ENCODE measurements at regions of chr12 and their contacts with region 1.

Region 1: DNA sequence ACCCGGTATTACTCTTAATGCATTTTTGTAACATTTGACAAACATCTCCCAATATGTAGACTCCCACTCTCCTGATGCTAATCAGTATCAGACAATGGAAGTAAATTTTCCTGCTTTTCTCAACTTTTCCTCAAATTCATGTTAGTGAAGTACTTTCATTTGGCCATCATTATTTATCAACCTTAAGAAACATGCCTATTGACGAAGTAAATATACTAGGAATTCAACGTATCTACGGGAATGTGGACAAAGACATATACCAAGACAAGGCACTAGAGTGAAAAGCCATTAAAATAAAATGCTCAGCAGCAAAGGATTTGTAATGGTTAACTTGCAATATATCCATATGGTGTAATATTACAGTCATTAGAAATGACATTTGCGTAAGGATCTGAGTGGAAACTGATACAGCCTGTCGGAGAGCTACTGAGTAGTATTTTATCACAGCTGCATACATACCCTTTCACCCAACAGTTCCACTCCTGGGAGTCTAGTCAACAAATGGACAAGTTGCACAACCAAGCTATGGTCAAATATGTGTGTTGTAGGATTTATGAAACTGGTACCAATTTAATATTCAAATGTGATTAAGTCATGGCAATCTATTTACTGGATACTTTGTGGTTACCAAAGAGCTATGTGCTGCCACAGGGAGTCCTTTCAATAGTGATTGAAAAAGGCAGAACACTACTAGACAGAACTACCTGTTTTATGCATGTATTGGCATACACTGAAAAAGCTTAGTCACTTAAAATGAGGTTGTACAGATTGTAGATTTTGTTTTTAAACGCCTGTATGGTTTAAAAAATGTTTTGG is 26.5 kb downstream of the NUDT4 start:
- DNase-seq: no peak
- ATAC-seq: peak; percentile 45
- H3K4me3 ChIP-seq: no peak overlapping the region
- H3K27ac ChIP-seq: peak overlapping the region; percentile 31
- H3K4me1 ChIP-seq: peaks cover 10% of the 10 kb centered on the region; the same call in 1 of the 2 replicates
- H3K27me3 ChIP-seq: no peaks in the 10 kb centered on the region
- CTCF ChIP-seq: no peak
- EP300 ChIP-seq: no peak
- POLR2A ChIP-seq: no peak; a peak in 1 of 4 replicates
- RAD21 ChIP-seq: no peak

Region 2: DNA sequence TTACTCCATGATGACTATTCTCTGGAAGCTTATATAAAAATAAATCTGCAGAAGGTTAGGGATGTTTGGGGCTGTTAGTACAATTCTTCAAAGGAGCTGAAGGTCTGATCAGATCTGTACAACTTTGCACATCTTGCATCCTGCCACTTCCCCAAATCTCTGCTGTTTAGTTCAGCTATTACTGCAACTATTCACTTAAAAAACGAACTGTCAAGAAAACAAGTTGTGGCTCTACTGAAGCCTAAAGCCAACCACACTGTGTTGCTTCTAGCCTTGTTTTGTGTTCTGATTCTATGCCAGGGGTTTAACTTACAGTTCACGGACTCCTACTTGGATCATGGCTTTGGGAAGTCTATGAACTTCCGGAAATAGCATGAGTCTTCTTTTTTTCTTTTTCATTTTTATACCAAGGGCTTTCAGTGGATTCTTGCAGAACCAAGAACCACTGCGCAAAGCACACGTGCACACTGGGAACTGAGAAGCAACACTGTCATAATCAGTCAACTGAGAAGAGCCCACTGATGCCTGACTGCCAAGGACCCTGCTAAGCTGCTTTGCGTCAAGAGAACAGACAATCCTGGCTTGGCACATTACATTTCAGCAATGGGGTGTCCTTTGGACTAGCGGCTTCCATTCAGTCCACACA is 408.8 kb before region 1 on chr12:
- CTCF ChIA-PET with region 1: no interaction called
- POLR2A ChIA-PET with region 1: no interaction called
- in situ Hi-C with region 1: loop called (anchors 10 kb)
- intact Hi-C with region 1: no loop called
- DNase-seq: no peak
- ATAC-seq: no peak
- H3K4me3 ChIP-seq: no peak overlapping the region
- H3K27ac ChIP-seq: no peak overlapping the region
- H3K4me1 ChIP-seq: peaks cover 6% of the 10 kb centered on the region
- H3K27me3 ChIP-seq: no peaks in the 10 kb centered on the region
- CTCF ChIP-seq: no peak
- EP300 ChIP-seq: no peak
- POLR2A ChIP-seq: no peak
- RAD21 ChIP-seq: no peak

Region 3: DNA sequence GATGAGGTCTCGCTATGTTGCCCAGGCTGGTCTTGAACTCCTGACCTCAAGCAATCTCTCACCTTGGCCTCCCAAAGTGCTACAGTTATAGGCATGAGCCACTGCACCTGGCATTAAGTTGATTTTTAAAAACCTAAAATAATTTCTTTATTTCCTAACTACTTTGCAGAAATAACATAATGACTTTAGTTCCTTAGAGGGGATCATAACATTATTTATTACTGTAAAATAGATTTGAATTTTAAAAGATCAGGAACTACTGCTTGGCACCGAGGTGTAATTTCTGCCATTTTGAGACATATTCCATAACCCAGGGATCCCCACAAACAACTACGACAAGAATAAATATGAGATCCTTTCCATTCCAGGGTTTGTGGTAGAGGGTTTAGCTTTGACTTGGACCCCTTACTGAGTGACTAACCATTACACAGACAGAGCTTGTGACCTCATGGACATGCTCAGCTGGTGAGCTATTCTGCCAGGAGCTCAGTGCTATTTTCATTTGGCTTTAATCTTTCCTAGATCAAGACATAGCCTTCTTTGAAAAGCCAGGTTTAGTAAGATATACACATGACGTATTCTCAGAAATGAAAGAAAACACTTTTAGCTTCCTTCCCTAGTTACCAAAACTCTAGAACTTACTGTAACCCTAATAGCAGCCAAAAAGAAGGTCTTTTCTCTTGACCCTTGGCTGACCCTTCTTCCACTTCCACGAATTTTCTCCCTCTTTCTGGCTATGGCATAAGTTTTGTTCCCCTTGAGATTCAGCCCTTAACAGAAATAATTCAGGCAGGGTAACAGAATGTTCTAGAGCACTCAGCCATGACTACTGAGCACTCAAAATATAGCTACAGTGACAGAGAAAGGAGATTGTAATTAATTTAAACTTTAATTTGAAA is 101.6 kb before region 1 on chr12:
- CTCF ChIA-PET with region 1: no interaction called
- POLR2A ChIA-PET with region 1: no interaction called
- in situ Hi-C with region 1: no loop called
- intact Hi-C with region 1: no loop called
- DNase-seq: no peak
- ATAC-seq: no peak
- H3K4me3 ChIP-seq: no peak overlapping the region
- H3K27ac ChIP-seq: no peak overlapping the region
- H3K4me1 ChIP-seq: peaks cover 16% of the 10 kb centered on the region
- H3K27me3 ChIP-seq: no peaks in the 10 kb centered on the region
- CTCF ChIP-seq: no peak
- EP300 ChIP-seq: no peak
- POLR2A ChIP-seq: no peak
- RAD21 ChIP-seq: no peak

Region 4: DNA sequence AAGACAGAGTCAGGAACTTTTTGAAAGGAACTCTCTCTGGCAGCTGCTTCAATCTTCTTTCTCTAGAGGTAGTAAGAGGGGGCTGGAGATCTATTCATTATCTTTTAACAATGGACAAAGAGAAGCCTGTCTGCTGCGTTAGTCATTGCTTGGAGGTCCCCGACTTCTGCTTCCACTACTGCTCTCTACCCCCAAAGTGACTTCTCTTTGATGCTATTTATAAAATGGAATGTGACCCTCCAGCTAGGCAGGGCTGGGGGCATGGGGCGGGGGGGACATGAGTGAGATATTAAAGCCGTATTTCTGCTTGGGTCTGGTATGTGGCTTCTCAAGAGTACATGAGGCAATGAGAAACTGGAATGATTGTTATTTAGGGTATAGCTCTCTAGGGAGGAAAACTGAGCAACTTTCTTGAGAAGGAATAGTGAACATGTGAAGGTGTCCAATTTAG is 67.9 kb before region 1 on chr12:
- CTCF ChIA-PET with region 1: no interaction called
- POLR2A ChIA-PET with region 1: no interaction called
- in situ Hi-C with region 1: no loop called
- intact Hi-C with region 1: no loop called
- DNase-seq: peak; percentile 86
- ATAC-seq: peak; percentile 87
- H3K4me3 ChIP-seq: no peak overlapping the region; a peak in 1 of 6 replicates
- H3K27ac ChIP-seq: peak overlapping the region; percentile 32
- H3K4me1 ChIP-seq: peaks cover 19% of the 10 kb centered on the region
- H3K27me3 ChIP-seq: no peaks in the 10 kb centered on the region
- CTCF ChIP-seq: no peak
- EP300 ChIP-seq: 0 out of 4 replicates have a peak, but pooled peaks of 1 of the 2 experiments have one; percentile 5
- POLR2A ChIP-seq: no peak
- RAD21 ChIP-seq: no peak

Region 5: GRCh38 chr12:93612776-93613175 is 208.6 kb after region 1 on chr12:
- CTCF ChIA-PET with region 1: no interaction called
- POLR2A ChIA-PET with region 1: no interaction called
- in situ Hi-C with region 1: no loop called
- intact Hi-C with region 1: no loop called
- DNase-seq: no peak
- ATAC-seq: no peak
- H3K4me3 ChIP-seq: no peak overlapping the region
- H3K27ac ChIP-seq: no peak overlapping the region
- H3K4me1 ChIP-seq: no peaks in the 10 kb centered on the region
- H3K27me3 ChIP-seq: peaks cover 0 to 17% of the 10 kb centered on the region in 2 experiments; a peak in 2 of 5 replicates
- CTCF ChIP-seq: no peak
- EP300 ChIP-seq: no peak
- POLR2A ChIP-seq: no peak
- RAD21 ChIP-seq: no peak

Measured in HepG2 (cell line).